Dendritic cell treated with granulocyte-macrophage colony-stimulating factor and Interleukin-4, amounts not matched to agents 40 ng/mL and 50 ng/mL, for 4 days (primary cell): ENCODE measurements at regions of chr12 and their contacts with region 1.

Region 1: GRCh38 chr12:56724972-56725722 is at the start of gene NACA:
- H3K4me3 Mint-ChIP-seq: peak within 1 kb of the TSS; percentile 97
- H3K27ac Mint-ChIP-seq: peak within 1 kb of the TSS; percentile 99
- H3K4me1 Mint-ChIP-seq: peaks cover 48% of the 10 kb centered on the region
- H3K27me3 Mint-ChIP-seq: no peaks in the 10 kb centered on the region

Region 2: DNA sequence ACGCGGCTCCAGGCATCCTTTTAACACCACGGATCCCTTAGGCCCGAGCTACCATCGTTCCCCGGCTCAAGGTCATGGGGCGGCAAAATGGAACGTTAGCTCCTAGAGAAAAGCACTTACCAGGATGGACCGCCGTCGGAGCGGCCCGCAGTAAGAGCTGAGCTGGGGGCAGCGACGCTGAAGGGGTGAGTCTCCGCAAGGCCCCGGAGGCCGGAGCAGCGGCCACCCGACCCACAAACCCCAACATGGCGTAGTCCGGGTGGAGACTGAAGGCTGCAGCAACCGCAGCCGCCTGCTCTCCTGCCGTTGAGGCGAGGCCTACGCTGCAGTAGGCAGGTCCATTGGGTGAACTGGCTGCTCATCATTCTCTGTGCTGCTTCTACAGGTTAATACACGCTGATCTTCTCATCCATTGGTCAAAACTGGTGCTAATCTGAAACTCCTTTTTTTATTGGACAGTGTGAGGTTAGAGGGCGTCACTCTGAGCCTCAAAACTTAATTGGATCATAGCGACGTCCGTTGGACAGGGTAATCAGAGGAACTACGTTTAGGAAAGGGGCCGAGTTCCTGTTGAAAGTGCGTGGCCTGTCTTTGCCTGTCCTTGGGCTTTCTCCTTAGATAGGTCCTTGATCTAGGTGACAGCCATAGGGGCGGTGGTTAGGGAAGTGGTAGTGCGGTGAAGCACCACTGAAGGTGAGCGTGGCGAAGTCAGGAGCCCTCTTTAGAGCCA is 79.3 kb before region 1 on chr12 and contains the start of gene ATP5F1B:
- intact Hi-C with region 1: loop called (anchors 1 kb)
- H3K4me3 Mint-ChIP-seq: peak within 1 kb of the TSS; percentile 89
- H3K27ac Mint-ChIP-seq: peak within 1 kb of the TSS; percentile 99
- H3K4me1 Mint-ChIP-seq: peaks cover 20% of the 10 kb centered on the region
- H3K27me3 Mint-ChIP-seq: no peaks in the 10 kb centered on the region

Region 3: DNA sequence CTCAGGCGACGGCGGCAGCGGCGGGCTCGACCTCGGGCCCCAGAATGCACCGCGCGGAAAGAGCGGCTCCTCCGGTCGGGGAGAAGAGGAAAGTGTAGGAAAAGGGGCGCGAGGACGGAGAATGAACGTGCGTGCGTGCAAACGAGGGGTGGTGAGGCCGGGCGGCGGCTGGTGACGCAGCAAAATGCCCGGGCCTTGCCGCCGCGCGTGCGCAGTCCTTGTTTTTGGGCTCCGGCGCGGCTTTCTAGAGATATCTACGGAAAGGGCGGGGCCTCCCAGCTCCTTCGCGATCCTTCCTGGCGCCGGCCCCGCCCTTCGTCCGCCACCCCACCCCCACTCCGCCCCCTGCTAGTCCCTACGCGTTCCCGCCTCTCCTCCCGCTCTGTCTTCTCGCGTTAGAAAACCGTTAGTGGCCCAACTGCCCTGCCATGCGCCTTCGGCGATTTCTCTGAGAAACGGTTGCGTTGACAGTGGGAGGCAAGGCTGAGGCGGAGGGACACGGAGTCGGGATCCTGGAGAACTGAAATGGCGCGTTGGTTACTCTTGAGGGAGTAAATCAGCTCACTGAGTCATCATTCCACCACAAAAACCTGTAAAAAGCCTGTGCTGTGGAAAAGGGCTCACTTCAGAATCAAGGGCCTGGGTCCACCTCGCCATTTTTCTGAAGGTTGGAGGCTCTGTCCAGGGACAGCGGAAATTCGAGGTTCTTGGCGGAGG is 36.9 kb before region 1 on chr12 and contains the start of gene PTGES3:
- intact Hi-C with region 1: loop called (anchors 1 kb)
- H3K4me3 Mint-ChIP-seq: peak within 1 kb of the TSS; percentile 99
- H3K27ac Mint-ChIP-seq: peak within 1 kb of the TSS; percentile 99
- H3K4me1 Mint-ChIP-seq: peaks cover 24% of the 10 kb centered on the region
- H3K27me3 Mint-ChIP-seq: no peaks in the 10 kb centered on the region

Region 4: GRCh38 chr12:56863789-56864188 is 138.6 kb after region 1 on chr12:
- intact Hi-C with region 1: no loop called
- H3K4me3 Mint-ChIP-seq: no peak overlapping the region
- H3K27ac Mint-ChIP-seq: no peak overlapping the region
- H3K4me1 Mint-ChIP-seq: no peaks in the 10 kb centered on the region
- H3K27me3 Mint-ChIP-seq: peaks cover 2% of the 10 kb centered on the region

Region 5: DNA sequence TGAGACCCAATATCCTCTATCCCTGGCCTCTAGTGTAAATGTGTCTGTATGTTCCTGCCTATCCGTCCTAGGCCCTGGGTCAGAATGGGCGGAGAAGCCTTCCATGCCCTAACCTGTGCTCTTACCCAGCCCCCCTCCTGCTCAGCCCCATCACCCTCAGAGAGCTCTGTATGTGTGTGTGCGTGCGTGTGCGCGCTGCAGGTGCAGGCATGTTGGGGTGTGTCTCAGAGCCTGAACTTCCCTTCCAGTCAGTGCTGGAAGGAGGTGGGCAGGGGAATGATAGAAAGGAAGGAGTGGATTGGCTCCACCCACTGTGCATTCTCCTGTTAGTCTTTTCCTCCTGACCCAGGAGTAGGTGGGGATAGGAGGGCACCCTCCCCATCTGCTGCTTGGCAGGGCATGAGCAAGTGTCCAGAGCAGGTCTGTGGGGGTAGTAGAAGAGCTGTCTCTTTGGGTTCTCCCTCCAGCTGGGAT is 371.0 kb after region 1 on chr12:
- intact Hi-C with region 1: no loop called
- H3K4me3 Mint-ChIP-seq: no peak overlapping the region
- H3K27ac Mint-ChIP-seq: peak overlapping the region; percentile 72
- H3K4me1 Mint-ChIP-seq: peaks cover 92% of the 10 kb centered on the region
- H3K27me3 Mint-ChIP-seq: no peaks in the 10 kb centered on the region